PC-9 (cell line): ENCODE measurements at regions of chr18 and their contacts with region 1.

Region 1: DNA sequence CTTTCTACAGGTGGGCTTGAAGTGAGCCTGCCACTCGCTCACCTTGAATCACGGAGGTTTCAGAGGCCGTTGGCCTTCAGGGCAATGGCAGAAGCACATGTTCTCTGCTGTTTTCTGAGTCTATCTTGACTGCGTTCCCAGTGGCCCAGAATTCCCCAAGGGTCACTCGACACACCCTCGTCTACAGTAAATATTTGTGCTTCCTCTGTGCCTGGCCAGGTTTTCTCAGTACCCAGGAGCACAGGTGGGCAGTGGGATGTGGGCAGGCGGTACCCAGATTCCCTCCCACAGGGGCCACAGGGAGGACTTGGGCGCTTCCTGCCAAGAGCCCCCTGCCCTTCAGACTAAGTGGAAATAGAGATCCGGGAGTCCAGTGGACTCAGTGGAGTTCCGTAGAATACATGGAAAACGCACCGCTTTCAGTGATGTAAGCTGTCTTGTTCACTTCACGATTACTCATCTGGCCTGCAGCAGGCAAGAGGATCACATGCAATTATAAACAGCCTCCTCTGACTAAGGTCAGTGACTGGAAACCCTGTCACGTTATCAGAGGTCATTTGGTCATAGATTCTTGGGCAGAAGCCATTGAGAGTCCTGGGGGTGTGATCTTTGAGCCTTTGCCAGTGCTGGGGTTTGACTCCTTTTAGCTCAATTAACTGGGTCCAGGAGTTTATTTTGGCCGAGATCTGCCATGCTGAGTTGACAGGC is 179.8 kb downstream of the NEDD4L start:
- DNase-seq: peak; percentile 51 to 93
- H3K4me3 ChIP-seq: peak overlapping the region; percentile 80
- H3K27ac ChIP-seq: peak overlapping the region; percentile 89
- H3K4me1 ChIP-seq: peaks cover 49% of the 10 kb centered on the region
- H3K27me3 ChIP-seq: no peaks in the 10 kb centered on the region
- CTCF ChIP-seq: no peak

Region 2: DNA sequence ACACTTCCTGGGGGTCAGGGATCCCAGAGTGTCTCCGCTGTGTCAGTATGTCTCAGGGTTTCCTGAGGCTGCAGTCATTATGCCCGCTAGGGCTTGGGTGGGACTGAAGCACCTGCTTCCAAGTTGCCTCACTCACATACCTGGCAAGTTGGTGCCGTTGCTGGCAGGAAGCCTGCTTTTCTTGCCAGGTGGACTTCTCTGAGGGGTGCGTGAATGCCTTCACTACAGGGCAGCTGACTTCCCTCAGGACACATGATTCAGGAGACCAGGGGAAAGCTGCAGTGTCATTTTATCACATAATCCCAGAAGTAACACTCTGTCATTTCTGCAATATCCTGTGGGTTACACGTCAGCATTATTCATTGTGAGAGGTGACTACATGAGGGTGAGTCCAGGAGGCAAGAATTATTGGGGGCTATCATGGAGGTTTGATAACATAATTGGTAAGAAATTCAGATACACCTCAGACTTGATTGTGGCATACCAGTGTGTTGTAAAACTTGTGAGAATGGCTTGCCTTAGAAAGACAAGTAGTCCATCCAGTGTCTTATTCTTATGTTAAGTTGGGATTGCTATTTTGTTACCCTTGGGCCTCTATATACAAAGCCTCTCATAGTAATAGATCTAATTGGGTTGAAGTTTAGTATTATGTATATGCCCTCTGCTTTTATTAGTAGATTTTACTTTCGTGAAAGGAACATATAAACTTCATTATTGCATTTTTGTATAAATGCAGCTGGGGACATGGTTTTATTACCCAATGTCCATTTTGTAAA is 135.8 kb before region 1 on chr18:
- CTCF ChIA-PET with region 1: no interaction called
- POLR2A ChIA-PET with region 1: no interaction called
- intact Hi-C with region 1: loop called (anchors 1 kb)
- DNase-seq: peak; percentile 86 to 100
- H3K4me3 ChIP-seq: no peak overlapping the region; the same call in 1 of the 2 replicates
- H3K27ac ChIP-seq: peak overlapping the region; percentile 97
- H3K4me1 ChIP-seq: peaks cover 78% of the 10 kb centered on the region
- H3K27me3 ChIP-seq: no peaks in the 10 kb centered on the region
- CTCF ChIP-seq: no peak

Region 3: DNA sequence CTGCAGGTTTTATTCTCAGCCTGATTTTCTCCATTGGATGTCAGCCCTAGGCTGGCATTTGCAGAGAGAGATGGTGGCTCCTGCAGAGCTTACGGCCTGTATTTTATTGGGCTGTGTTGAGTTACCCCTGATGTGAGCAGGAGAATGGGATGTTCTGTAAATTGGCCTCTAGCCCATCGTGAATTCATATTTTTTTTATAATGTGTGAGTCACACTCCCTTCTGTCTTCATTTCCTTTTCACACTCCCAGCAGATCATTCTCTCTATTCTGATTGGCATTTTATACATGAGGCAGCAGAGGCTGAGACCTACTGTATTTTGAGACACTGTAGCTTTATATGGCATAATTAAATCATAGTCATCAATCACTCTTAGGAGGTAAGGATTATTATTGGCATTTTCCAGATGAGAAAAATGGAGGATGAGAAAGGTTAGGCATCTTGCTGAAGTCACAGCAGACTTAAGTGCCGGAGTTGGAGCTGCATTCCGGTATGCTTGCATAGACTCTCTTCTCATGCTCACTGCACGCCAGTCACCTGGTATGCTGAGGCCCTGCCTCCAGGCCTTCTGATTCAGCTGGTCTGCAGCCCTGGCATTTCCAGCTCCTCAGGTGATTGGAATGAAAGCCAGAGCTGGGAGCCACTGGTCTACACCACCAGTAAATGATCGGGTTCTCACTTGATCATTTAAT is 37.5 kb before region 1 on chr18:
- CTCF ChIA-PET with region 1: no interaction called
- POLR2A ChIA-PET with region 1: interaction called, 12 read pairs
- intact Hi-C with region 1: loop called (anchors 1 kb)
- DNase-seq: peak; percentile 73 to 96
- H3K4me3 ChIP-seq: peak overlapping the region; percentile 32; the same call in 1 of the 2 replicates
- H3K27ac ChIP-seq: peak overlapping the region; percentile 92
- H3K4me1 ChIP-seq: peaks cover 85% of the 10 kb centered on the region
- H3K27me3 ChIP-seq: no peaks in the 10 kb centered on the region
- CTCF ChIP-seq: no peak

Region 4: DNA sequence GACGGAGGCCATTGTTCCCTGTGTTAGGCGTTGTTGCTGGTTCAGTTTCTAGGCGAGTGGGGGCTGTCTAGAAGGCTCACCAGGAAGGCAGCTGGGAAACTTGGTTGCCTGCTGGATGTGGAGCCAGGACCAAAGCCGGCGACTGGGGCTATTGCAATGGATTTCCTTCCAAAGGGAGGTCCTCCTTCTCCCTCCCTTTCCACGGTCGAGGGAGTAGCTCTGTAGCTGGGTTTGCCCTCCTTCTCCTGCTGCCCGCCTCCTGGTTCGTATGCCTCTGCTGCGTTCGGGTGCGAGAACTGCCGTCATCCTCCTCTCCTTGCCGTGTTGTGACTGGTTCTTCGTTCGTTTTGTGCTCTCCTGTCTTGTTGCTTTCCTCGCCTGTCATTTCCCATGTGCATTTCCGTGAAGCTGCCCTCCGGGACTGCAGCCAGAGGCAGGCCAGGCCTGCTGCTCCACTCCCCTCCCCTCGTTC is 23.5 kb after region 1 on chr18:
- CTCF ChIA-PET with region 1: no interaction called
- POLR2A ChIA-PET with region 1: no interaction called
- intact Hi-C with region 1: no loop called
- DNase-seq: no peak
- H3K4me3 ChIP-seq: no peak overlapping the region
- H3K27ac ChIP-seq: no peak overlapping the region
- H3K4me1 ChIP-seq: no peaks in the 10 kb centered on the region
- H3K27me3 ChIP-seq: no peaks in the 10 kb centered on the region
- CTCF ChIP-seq: no peak

Region 5: DNA sequence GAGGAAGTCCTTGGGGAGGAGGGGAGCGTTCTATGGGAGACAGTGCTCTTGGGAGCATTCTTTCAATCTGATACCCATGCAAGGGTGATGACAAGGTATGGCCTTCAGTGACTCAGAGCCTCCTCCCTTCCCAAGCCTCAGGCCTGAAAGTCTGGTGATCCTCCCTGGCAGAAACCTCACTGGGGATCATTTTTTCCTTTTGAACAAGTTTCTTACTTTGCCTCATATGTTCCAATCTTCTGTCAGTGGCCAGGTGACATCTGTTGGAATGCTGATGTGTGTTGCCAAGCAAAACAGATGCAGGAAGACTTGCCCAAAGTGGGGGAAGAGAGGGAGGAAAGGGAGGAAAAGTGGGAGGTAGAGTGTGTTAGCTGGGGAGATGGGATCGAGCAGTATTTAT is 45.0 kb after region 1 on chr18:
- CTCF ChIA-PET with region 1: no interaction called
- POLR2A ChIA-PET with region 1: interaction called, 6 read pairs
- intact Hi-C with region 1: loop called (anchors 1 kb)
- DNase-seq: peak; percentile 71 to 97
- H3K4me3 ChIP-seq: peak overlapping the region; percentile 47; the same call in 1 of the 2 replicates
- H3K27ac ChIP-seq: peak overlapping the region; percentile 95
- H3K4me1 ChIP-seq: peaks cover 76% of the 10 kb centered on the region
- H3K27me3 ChIP-seq: no peaks in the 10 kb centered on the region
- CTCF ChIP-seq: no peak